Transverse colon (tissue), 4 donors: ENCODE measurements at regions of chr3 and their contacts with region 1.

Region 1: DNA sequence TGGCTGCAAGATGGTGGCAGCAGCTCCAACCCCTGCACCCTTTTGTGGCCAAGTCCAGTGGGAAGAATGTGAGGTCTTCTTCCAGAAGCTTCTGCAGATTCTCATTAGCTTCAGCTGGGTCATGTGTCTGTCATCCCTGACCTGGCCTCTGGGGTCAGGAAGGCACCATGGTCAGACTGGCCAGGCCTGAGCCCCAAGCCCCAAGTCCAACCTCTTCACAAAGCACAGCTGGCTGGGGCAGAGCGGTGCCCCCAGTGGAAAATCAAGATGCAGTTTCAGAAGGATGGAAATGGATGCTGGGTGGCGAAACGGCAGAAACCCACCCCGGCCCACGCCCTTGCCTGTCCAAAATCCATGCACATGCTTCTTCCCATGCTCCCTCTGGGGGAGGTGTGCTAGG is 15.9 kb upstream of the GATA2 start:
- DNase-seq: no peak
- H3K4me3 ChIP-seq: no peak overlapping the region
- H3K27ac ChIP-seq: no peak overlapping the region
- H3K4me1 ChIP-seq: no peaks in the 10 kb centered on the region
- H3K27me3 ChIP-seq: peaks cover 29% of the 10 kb centered on the region
- CTCF ChIP-seq: no peak
- EP300 ChIP-seq: no peak
- POLR2A ChIP-seq: no peak

Region 2: DNA sequence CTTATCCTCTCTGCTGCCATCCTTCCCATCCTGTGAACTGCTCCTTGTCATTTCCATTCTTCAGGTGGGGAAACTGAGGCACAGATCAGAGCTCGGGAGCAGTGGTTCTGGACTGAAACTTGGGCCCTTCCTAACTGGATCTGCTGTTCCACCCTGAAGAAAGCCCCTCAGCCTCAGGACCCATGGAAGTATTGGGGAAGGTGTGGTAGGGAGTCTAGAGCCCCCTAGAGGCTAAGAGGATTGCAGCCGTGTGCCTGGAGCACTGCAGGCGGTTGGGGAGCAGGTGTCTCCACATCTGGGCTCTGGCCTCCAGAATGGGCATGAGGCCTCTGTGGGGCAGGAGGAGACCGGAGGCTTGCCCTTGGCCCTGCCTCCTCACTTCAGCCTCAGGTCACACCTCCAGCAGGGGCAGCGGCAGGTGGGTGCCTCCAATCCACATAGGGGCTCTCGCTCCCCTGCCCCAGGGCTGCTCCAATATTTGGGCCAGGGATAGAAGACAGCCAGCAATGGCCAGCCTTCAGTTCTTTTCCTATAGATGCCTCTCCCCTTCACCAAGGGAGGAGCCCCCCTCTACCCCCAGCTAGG is 70.3 kb before region 1 on chr3:
- in situ Hi-C with region 1: no loop called
- intact Hi-C with region 1: loop called (anchors 1 kb)
- DNase-seq: no peak
- H3K4me3 ChIP-seq: no peak overlapping the region
- H3K27ac ChIP-seq: no peak overlapping the region
- H3K4me1 ChIP-seq: no peaks in the 10 kb centered on the region
- H3K27me3 ChIP-seq: peaks cover 31% of the 10 kb centered on the region
- CTCF ChIP-seq: peak in 3 of 5 experiments; percentile 5 to 31 (median 27)
- EP300 ChIP-seq: no peak
- POLR2A ChIP-seq: no peak

Region 3: GRCh38 chr3:128456776-128457715 is 51.8 kb before region 1 on chr3:
- in situ Hi-C with region 1: no loop called
- intact Hi-C with region 1: no loop called
- DNase-seq: no peak
- H3K4me3 ChIP-seq: no peak overlapping the region
- H3K27ac ChIP-seq: no peak overlapping the region
- H3K4me1 ChIP-seq: no peaks in the 10 kb centered on the region
- H3K27me3 ChIP-seq: peaks cover 21% of the 10 kb centered on the region
- CTCF ChIP-seq: no peak
- EP300 ChIP-seq: no peak
- POLR2A ChIP-seq: no peak